HEK293T (cell line): ENCODE measurements at regions of chr16 and their contacts with region 1.

Region 1: DNA sequence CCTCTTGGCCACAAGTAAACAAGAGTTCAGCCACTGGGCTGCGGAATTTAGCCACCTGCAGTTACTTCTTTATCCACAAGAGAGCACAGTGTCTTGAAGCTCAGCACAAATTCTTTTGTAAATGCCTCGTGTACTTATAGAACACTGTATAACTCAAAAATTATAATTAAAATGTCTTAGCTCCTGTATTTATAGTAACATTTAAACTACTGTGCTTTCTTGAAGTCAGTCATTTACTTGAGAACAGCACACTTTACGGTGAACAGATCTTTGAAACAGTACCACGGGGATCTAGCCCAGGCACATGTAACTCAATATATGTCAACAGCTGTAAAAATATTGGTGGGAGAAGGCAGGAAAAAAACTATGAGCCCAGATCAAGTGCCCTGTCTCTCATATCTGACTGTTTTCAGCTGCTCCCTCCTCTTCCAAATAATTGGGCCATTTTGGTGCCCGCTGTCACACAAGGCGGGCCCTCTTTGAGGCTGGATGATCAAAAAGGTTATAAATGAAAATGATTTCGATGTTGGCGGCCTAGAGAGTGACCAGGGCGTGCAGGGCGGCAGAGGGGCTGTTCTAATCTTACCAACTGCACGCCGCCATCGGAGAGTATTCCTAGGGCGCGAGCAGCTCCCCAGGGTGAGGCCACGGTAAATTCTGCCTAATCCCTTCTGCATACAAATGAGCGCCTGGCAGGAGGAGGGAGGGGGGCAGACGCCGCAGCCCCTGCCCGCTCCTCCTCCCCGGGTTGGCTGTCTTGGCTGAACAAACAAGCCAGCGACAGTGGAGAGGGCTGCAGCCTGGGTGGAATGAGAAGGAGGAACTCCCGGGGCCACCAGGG is 183.2 kb downstream of the C16orf78 start:
- DNase-seq: peak; percentile 59

Region 2: DNA sequence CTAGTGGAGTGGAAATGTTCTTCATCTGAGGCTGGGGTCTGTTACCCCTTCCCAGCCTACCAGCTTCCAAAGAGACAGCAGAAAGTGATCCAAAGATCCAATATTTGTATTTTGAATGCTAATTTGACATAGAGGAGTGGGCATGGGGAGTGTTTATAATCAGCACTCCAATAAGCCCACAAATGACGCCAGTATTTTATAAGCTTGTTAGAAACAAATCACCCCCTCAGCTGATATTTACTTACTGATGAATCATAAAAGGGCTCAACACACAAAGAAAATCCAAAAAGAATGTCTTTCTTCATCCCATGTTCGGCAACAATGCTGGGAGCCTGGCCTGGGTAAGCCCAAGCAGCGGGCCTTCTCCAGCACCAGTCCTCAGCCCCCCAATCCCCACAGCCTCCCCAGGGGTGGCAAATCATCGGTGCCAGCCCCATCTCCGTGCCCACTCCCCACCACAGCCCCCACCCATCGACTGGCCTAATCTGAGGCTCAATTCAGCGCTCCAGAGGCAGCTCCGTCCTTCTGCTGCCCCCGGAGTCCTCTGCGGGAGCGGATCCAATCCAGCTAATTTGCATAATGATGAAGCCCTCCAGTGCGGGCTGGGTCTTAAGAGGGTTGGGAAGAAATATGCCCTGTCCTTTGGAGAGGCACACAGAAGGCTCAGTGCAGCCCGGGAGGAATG is 13.7 kb before region 1 on chr16:
- CTCF ChIA-PET with region 1: interaction called, 14 read pairs
- POLR2A ChIA-PET with region 1: no interaction called
- DNase-seq: no peak